ACHN (cell line): ENCODE measurements at regions of chr12 and their contacts with region 1.

Region 1: DNA sequence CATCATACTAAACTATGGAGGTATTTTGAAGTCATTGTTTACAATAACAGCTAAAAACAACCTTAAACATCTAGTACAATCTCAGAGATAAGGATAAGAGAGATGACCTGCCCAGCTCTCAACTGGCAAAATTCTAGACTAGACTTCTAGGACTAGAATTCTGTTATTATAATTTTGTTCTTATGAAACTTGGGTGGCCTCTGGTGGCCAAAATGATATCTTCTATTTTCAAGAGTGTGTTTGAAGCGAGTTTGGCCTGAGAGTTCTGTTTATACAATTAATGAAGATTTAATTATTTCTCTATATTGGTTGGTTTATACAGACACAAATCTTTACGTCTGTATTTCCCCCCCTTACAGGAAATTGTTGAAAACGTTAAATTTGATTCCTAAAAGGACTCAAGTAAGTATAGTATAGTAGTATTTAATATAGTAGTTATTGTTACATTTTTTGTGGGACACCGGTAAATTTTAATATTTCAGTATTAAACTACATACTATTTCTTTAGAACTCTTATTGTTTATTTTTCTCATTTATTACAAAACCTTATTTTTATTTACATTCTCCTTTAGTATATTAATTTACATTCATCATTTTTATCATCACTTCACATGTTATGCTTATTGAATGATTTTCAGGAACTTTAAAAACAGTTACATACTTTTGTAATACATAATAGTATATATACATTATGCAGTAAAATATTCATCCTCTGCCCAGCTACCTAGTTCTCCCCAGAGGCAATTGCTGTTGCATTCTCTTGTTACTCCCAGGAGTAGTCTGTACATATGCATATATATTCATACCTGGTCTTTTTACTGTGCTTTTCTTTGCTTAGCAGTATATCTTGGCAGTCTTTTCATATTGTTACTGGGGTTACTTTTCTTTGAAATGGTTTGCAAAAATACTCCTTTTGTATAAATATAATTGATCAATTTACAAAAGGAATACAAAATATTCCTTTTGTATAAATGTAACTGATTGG is 6.6 kb downstream of the PPHLN1 start:
- DNase-seq: peak; percentile 77

Region 2: GRCh38 chr12:42129595-42130204 is 202.9 kb before region 1 on chr12:
- in situ Hi-C with region 1: loop called (anchors 10 kb)
- DNase-seq: peak; percentile 89